B cell (primary cell): ENCODE measurements at regions of chr6 and their contacts with region 1.

Region 1: DNA sequence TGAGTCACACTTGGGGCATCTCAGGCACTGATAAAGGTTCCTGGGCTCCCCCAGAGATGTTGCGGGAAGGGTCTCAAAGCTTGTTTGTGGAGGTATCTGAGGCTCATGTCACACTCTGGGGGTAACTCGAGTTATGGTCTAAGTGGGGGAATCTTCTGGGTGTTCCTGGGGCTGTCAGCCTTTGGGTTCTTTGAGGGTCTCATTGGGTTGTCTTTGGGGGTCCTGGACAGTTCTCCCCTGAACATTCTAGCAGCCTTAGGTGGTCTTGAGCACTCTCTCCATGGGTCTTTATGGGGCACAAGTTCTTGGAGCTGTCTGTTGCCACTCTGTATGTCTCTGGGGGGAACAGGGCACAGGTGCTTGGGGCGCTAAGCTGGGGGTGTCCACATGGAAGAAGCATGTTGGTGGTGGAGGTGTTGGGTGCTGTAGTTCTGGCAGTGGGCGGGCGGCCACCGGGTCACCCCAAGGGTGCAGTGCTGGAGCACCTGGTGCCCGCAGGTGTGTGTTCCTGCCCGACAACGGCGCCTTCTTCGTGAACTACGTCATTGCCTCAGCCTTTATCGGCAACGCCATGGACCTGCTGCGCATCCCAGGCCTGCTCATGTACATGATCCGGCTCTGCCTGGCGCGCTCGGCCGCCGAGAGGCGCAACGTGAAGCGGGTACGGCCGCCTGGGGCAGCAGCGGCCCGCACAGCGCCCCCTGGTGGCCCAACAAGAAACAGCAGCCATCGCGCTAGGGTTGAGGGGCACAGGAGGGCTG is 7.1 kb upstream of the CAPN11 start:
- DNase-seq: peak; percentile 85
- ATAC-seq: peak; percentile 90
- H3K4me3 ChIP-seq: no peak overlapping the region
- H3K4me3 Mint-ChIP-seq: peak overlapping the region; percentile 19
- H3K27ac ChIP-seq: no peak overlapping the region
- H3K27ac Mint-ChIP-seq: peak overlapping the region; percentile 53
- H3K4me1 ChIP-seq: peaks cover 0 to 7% of the 10 kb centered on the region in 2 donors
- H3K4me1 Mint-ChIP-seq: no peaks in the 10 kb centered on the region
- H3K27me3 ChIP-seq: peaks cover 0 to 3% (median 0%) of the 10 kb centered on the region in 4 experiments
- H3K27me3 Mint-ChIP-seq: no peaks in the 10 kb centered on the region
- CTCF ChIP-seq: peak; percentile 92

Region 2: GRCh38 chr6:44090465-44090864 is 61.1 kb before region 1 on chr6:
- CTCF ChIA-PET with region 1: interaction called, 89 read pairs
- POLR2A ChIA-PET with region 1: interaction called, 12 read pairs
- intact Hi-C with region 1: no loop called
- DNase-seq: no peak
- ATAC-seq: no peak
- H3K4me3 ChIP-seq: no peak overlapping the region
- H3K4me3 Mint-ChIP-seq: no peak overlapping the region
- H3K27ac ChIP-seq: no peak overlapping the region
- H3K27ac Mint-ChIP-seq: no peak overlapping the region
- H3K4me1 ChIP-seq: no peaks in the 10 kb centered on the region
- H3K4me1 Mint-ChIP-seq: no peaks in the 10 kb centered on the region
- H3K27me3 ChIP-seq: no peaks in the 10 kb centered on the region
- H3K27me3 Mint-ChIP-seq: no peaks in the 10 kb centered on the region
- CTCF ChIP-seq: no peak

Region 3: DNA sequence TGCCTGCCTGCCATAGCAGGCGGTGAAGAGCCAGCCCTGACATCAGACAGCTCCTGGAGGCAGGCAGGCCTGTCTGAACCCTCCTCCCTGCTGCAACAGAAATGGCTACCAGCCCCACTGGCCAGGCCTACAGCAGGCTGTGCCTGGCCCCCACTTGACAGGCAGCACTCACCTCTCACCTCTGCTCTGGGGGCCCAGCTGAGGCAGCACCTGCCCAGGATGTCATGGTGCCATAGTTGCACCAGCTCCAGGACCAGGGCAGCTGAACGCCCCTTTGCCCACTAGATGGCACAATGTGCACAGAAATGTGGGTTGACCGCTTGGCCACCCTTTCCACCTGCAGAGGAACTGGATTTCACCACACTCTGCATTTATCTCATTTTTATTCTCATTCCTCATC is 54.9 kb before region 1 on chr6:
- CTCF ChIA-PET with region 1: interaction called, 89 read pairs
- POLR2A ChIA-PET with region 1: no interaction called
- intact Hi-C with region 1: loop called (anchors 1 kb)
- DNase-seq: peak; percentile 84
- ATAC-seq: peak; percentile 89
- H3K4me3 ChIP-seq: no peak overlapping the region
- H3K4me3 Mint-ChIP-seq: no peak overlapping the region
- H3K27ac ChIP-seq: no peak overlapping the region
- H3K27ac Mint-ChIP-seq: no peak overlapping the region
- H3K4me1 ChIP-seq: no peaks in the 10 kb centered on the region
- H3K4me1 Mint-ChIP-seq: no peaks in the 10 kb centered on the region
- H3K27me3 ChIP-seq: no peaks in the 10 kb centered on the region
- H3K27me3 Mint-ChIP-seq: no peaks in the 10 kb centered on the region
- CTCF ChIP-seq: peak; percentile 79

Region 4: DNA sequence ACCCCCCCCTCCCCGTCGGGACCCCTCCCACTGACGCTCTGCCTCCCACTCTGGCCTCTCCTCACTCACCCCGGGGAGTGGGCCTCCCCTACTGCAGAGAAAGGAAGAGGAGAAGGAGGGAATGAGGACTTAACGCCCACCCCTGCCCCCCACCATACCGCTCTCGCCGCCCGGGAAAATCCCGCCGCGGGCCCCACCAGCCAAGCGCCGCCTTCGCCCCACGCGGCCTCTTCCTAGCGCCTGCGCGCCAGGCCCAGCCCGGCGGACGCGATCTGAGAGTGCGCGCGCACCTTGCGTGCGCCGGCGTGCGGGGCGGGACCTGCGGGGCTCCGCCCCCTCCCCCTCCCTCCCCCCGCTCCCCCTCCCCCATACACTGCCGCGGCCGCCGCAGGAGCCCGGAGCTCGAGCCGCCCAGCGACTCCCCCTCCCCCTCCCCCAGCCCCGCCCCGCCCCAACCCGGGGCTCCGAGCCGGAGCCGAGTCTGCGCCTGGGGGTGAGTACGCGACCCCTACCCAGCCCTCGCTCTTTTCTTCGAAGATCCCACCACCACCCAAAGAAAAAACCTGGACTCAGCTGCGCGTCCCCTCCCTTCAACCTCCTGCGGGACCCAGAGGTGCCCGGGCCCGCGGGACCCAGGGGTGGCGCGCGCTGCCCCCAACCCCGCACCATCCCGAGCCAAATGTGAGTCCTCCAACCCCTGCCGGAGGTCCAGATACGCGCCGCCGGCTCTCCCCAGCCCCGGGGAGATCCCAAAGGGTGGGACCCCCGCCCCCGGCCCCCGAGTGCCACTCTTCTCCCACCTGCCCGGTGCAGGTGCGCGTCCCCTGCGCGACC is 24.1 kb before region 1 on chr6 and contains the starts of genes MRPL14 and TMEM63B:
- CTCF ChIA-PET with region 1: interaction called, 5 read pairs
- POLR2A ChIA-PET with region 1: interaction called, 4 read pairs
- intact Hi-C with region 1: loop called (anchors 2 kb)
- DNase-seq: peak; percentile 94
- ATAC-seq: peak; percentile 91
- H3K4me3 ChIP-seq: peak within 1 kb of the TSS; percentile 62 to 98 (median 91)
- H3K4me3 Mint-ChIP-seq: peak within 1 kb of the TSS; percentile 95
- H3K27ac ChIP-seq: peak within 1 kb of the TSS; percentile 83 to 94
- H3K27ac Mint-ChIP-seq: peak within 1 kb of the TSS; percentile 93
- H3K4me1 ChIP-seq: peaks cover 35 to 47% of the 10 kb centered on the region in 2 donors
- H3K4me1 Mint-ChIP-seq: peaks cover 50% of the 10 kb centered on the region
- H3K27me3 ChIP-seq: no peaks in the 10 kb centered on the region
- H3K27me3 Mint-ChIP-seq: no peaks in the 10 kb centered on the region
- CTCF ChIP-seq: no peak
- total RNA-seq, gene MRPL14: 16.7 and 16.8 TPM in 2 replicates
- total RNA-seq, gene TMEM63B: 18.3 and 19.1 TPM in 2 replicates

Region 5: DNA sequence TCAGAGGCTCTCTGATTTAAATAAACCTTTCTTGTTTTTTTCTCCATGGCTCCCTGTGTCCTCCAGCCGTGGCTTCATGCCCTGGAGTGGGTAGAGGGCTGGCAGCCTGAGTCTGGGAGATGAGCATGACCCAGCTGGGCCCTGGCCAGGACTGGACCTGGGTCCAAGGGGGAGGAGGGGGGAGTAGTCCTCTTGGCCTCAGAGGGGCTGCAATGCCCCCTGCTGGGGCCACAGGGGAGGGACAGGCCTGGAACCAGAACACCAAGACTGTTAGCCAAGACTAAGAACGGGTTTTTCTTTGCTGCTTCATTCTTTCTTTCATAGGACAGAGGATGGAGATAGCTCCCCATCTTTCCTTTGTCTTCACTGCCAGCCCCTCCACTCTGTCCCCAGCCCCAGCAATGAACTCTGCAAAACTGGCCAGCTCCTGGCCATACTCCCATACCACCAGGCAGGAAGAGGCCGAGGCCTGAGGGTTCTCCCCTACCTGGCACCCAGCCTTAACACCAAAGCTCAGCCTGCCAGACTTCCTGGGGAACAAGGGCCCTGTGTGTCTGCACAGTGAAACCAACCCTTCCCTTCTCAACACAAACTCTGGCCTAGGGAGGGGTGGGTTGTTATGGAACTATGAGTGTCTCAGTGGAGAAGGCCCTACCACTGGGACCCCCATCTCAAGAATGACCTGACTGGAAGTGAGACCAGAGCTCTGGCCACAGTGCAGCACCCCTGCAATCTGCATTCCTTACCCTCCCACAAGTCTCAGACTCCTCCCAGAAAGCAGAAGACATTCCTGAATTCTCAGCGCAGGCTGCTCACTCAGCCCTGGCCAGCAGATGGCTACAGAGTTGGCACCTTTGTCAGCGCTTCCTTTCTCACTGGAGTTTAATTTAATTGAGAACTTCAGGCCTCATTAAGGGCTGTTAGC is 82.8 kb after region 1 on chr6:
- CTCF ChIA-PET with region 1: no interaction called
- POLR2A ChIA-PET with region 1: no interaction called
- intact Hi-C with region 1: no loop called
- DNase-seq: peak; percentile 32
- ATAC-seq: no peak
- H3K4me3 ChIP-seq: no peak overlapping the region
- H3K4me3 Mint-ChIP-seq: no peak overlapping the region
- H3K27ac ChIP-seq: no peak overlapping the region
- H3K27ac Mint-ChIP-seq: no peak overlapping the region
- H3K4me1 ChIP-seq: peaks cover 6 to 14% of the 10 kb centered on the region in 2 donors
- H3K4me1 Mint-ChIP-seq: peaks cover 15% of the 10 kb centered on the region
- H3K27me3 ChIP-seq: no peaks in the 10 kb centered on the region
- H3K27me3 Mint-ChIP-seq: no peaks in the 10 kb centered on the region
- CTCF ChIP-seq: peak; percentile 41

Region 6: DNA sequence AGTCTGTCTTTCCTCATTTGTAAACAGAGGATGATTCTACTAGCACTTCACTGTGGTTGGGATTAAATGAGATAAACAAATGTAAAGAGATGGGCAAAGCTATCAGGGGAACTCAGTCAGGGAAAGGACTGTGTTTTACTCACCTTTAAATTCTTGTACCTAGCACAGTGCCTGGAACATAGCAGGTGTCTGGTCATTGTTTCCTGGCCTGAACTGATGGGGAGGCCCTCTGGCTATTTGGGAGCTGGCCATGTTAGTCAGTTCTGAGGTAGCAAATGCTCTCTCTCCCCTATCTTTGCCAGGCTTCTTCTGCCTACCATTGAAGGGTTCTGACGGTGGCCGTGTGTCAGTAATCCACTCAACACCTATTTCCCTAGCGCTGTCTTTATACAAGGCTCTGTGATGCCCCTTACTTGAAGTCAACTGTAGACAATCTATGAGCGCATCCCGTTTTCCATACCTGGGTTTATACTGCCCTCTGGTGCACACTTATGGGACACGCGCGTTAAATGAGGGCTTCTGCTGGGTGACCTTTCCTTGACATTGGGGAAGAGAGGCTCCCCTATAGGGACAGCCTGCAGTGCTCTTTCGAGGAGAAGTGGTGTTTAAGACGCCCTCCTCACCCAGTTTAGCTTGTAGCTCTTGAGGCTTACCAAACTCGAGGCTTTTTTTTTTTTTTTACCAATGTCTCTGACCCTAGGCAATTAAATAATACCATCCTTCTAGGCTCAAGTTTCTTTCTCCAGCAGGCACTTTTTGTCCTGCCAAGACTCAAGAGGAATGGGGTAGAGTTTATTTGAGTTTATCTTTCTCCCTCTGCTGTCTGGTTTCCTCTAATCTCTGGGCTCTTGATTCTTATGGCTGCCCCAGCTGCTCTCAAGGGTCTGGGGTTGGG is 186.9 kb after region 1 on chr6:
- CTCF ChIA-PET with region 1: interaction called, 3 read pairs
- POLR2A ChIA-PET with region 1: no interaction called
- intact Hi-C with region 1: loop called (anchors 1 kb)
- DNase-seq: peak; percentile 80
- ATAC-seq: peak; percentile 83
- H3K4me3 ChIP-seq: no peak overlapping the region
- H3K4me3 Mint-ChIP-seq: no peak overlapping the region
- H3K27ac ChIP-seq: no peak overlapping the region
- H3K27ac Mint-ChIP-seq: no peak overlapping the region
- H3K4me1 ChIP-seq: peaks cover 0 to 6% of the 10 kb centered on the region in 2 donors
- H3K4me1 Mint-ChIP-seq: no peaks in the 10 kb centered on the region
- H3K27me3 ChIP-seq: peaks cover 0 to 22% (median 19%) of the 10 kb centered on the region in 4 experiments
- H3K27me3 Mint-ChIP-seq: peaks cover 24% of the 10 kb centered on the region
- CTCF ChIP-seq: peak; percentile 82